ENCODE measurements at regions of chr6 and their contacts with region 1.

Region 1: GRCh38 chr6:116111552-116112528 is 11.2 kb downstream of the NT5DC1 start:
- DNase-seq: peak in 1 of 2 experiments; percentile 62
- H3K4me3 ChIP-seq: no peak overlapping the region
- H3K27ac ChIP-seq: no peak overlapping the region
- H3K4me1 ChIP-seq: peaks cover 0 to 6% (median 3%) of the 10 kb centered on the region in 4 experiments; a peak in 3 of 7 replicates
- H3K27me3 ChIP-seq: no peaks in the 10 kb centered on the region
- CTCF ChIP-seq: peak; percentile 19 to 81 (median 64)
- EP300 ChIP-seq: no peak
- POLR2A ChIP-seq: no peak
- RAD21 ChIP-seq: peak; percentile 52 to 70

Region 2: GRCh38 chr6:116049321-116049720 is 62.5 kb before region 1 on chr6:
- CTCF ChIA-PET with region 1: no interaction called
- POLR2A ChIA-PET with region 1: no interaction called
- DNase-seq: no peak
- H3K4me3 ChIP-seq: no peak overlapping the region
- H3K27ac ChIP-seq: no peak overlapping the region
- H3K4me1 ChIP-seq: no peaks in the 10 kb centered on the region
- H3K27me3 ChIP-seq: no peaks in the 10 kb centered on the region
- CTCF ChIP-seq: no peak
- EP300 ChIP-seq: no peak
- POLR2A ChIP-seq: no peak
- RAD21 ChIP-seq: no peak

Region 3: DNA sequence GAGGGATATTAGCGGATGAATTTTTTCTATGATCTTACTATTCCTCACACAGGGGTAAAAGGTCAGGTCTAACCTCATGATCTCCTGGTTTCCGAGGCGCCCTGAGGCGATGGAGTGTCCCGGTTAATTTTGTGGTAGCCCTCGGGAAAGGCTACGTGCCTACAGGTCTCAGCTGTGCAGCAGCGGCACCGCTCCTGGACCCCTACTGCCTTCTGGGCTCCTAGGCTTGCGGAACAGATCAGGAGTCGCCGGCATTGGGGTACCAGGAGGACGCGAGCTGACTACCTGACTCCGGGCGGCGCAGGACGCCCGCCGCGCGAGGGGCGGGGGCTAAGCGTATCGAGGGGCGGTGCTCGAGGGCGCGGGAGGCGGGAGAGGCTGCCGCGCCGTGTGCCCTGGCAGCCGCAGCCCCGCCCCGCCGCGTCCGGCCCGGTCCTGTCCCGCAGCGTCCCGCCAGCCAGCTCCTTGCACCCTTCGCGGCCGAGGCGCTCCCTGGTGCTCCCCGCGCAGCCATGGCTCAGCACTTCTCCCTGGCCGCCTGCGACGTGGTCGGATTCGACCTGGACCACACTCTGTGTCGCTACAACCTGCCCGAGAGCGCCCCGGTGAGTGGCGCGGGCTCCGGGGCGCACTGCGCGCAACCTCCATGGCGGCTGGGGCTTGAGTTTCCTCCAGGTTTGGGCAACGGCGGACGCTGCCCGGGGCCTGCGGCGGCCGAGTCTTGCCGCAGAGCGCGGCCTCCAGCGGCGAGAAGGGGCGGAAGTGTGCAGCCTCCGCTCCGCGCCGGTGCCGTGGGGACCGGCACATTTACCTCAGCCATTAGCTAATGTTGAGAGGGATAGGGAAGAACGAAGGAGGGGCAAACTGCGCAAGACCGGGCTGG is 11.2 kb before region 1 on chr6 and contains the start of gene NT5DC1:
- CTCF ChIA-PET with region 1: interaction called, 32 read pairs
- POLR2A ChIA-PET with region 1: interaction called, 18 read pairs
- DNase-seq: peak; percentile 71 to 92
- H3K4me3 ChIP-seq: peak within 1 kb of the TSS; percentile 78 to 97 (median 86)
- H3K27ac ChIP-seq: peak within 1 kb of the TSS; percentile 98
- H3K4me1 ChIP-seq: peaks cover 0 to 25% (median 11%) of the 10 kb centered on the region in 4 experiments; a peak in 6 of 7 replicates
- H3K27me3 ChIP-seq: no peaks in the 10 kb centered on the region
- CTCF ChIP-seq: peak in 2 of 3 experiments; percentile 21 to 36; a peak in 3 of 4 replicates
- EP300 ChIP-seq: 0 out of 3 replicates have a peak, but pooled peaks of 1 of the 2 experiments have one; percentile 3
- POLR2A ChIP-seq: peak; percentile 94 to 97
- RAD21 ChIP-seq: no peak; a peak in 1 of 4 replicates
- total RNA-seq, gene NT5DC1: 72.7 and 77.9 TPM in 2 replicates

Region 4: GRCh38 chr6:116126032-116126431 is 14.2 kb after region 1 on chr6 and contains the start of gene COL10A1:
- CTCF ChIA-PET with region 1: interaction called, 15 read pairs
- POLR2A ChIA-PET with region 1: interaction called, 5 read pairs
- DNase-seq: no peak
- H3K4me3 ChIP-seq: no peak within 1 kb of the TSS
- H3K27ac ChIP-seq: no peak within 1 kb of the TSS
- H3K4me1 ChIP-seq: no peaks in the 10 kb centered on the region
- H3K27me3 ChIP-seq: no peaks in the 10 kb centered on the region
- CTCF ChIP-seq: no peak
- EP300 ChIP-seq: no peak
- POLR2A ChIP-seq: no peak
- RAD21 ChIP-seq: no peak
- total RNA-seq, gene COL10A1: not detected in 2 replicates